Activated CD4-positive, alpha-beta memory T cell treated with anti-CD3 and anti-CD28 coated beads for 36 hours (primary cell): ENCODE measurements at regions of chr15 and their contacts with region 1.

Region 1: GRCh38 chr15:82952158-82953081 is at the start of gene HOMER2:
- DNase-seq: peak; percentile 16
- H3K4me3 Mint-ChIP-seq: peak within 1 kb of the TSS; percentile 73
- H3K27ac Mint-ChIP-seq: no peak within 1 kb of the TSS
- H3K4me1 Mint-ChIP-seq: no peaks in the 10 kb centered on the region
- H3K27me3 Mint-ChIP-seq: peaks cover 8% of the 10 kb centered on the region
- total RNA-seq, gene HOMER2: 6.5 to 7.9 TPM

Region 2: GRCh38 chr15:82832601-82833361 is 119.6 kb before region 1 on chr15:
- CTCF ChIA-PET with region 1: no interaction called
- POLR2A ChIA-PET with region 1: no interaction called
- intact Hi-C with region 1: loop called (anchors 5 kb)
- DNase-seq: peak; percentile 67
- H3K4me3 Mint-ChIP-seq: no peak overlapping the region
- H3K27ac Mint-ChIP-seq: peak overlapping the region; percentile 50
- H3K4me1 Mint-ChIP-seq: peaks cover 28% of the 10 kb centered on the region
- H3K27me3 Mint-ChIP-seq: no peaks in the 10 kb centered on the region

Region 3: GRCh38 chr15:82966671-82967071 is 14.3 kb after region 1 on chr15:
- CTCF ChIA-PET with region 1: no interaction called
- POLR2A ChIA-PET with region 1: no interaction called
- intact Hi-C with region 1: loop called (anchors 1 kb)
- DNase-seq: peak; percentile 61
- H3K4me3 Mint-ChIP-seq: no peak overlapping the region
- H3K27ac Mint-ChIP-seq: no peak overlapping the region
- H3K4me1 Mint-ChIP-seq: peaks cover 5% of the 10 kb centered on the region
- H3K27me3 Mint-ChIP-seq: no peaks in the 10 kb centered on the region

Region 4: DNA sequence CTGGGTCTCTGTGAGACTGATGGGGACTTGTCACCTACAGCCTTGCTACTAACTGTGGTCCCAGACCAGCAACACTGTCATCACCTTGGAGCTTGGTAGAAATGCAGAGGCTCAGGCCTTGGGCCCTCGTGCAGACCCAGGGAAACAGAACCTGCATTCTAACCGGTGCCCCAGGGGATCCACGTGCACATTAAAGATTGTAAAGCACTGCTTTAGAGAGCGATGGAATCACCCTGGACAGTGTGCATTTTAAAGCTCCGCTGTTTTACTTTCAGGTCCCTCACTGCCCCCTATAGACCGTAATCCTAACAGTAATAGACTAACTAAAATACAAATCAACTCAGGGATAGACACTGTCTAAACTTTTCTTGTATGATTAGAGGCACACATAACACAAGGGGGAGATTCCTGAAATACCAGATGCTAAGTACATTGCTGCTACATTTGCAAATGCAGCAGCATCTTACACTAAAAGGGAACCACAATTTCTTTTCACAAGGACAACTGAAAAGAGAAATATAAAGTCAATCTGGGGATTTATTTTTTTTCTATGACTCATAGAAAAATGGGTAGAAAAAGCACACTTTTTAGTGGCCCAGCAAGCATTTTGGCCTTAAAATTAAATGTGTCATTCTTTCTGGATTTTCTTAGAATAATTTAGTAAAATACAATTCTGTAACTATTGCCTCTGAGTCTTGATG is 484.2 kb after region 1 on chr15:
- CTCF ChIA-PET with region 1: no interaction called
- POLR2A ChIA-PET with region 1: no interaction called
- intact Hi-C with region 1: no loop called
- DNase-seq: no peak
- H3K4me3 Mint-ChIP-seq: no peak overlapping the region
- H3K27ac Mint-ChIP-seq: no peak overlapping the region
- H3K4me1 Mint-ChIP-seq: peaks cover 2% of the 10 kb centered on the region
- H3K27me3 Mint-ChIP-seq: peaks cover 7% of the 10 kb centered on the region